A673 (cell line): ENCODE measurements at regions of chr15 and their contacts with region 1.

Region 1: GRCh38 chr15:29962407-29962806 is 120.3 kb upstream of the GOLGA8J start:
- DNase-seq: no peak
- H3K4me3 ChIP-seq: no peak overlapping the region
- H3K27ac ChIP-seq: no peak overlapping the region
- H3K4me1 ChIP-seq: no peaks in the 10 kb centered on the region
- H3K27me3 ChIP-seq: peaks cover 30% of the 10 kb centered on the region
- CTCF ChIP-seq: no peak

Region 2: DNA sequence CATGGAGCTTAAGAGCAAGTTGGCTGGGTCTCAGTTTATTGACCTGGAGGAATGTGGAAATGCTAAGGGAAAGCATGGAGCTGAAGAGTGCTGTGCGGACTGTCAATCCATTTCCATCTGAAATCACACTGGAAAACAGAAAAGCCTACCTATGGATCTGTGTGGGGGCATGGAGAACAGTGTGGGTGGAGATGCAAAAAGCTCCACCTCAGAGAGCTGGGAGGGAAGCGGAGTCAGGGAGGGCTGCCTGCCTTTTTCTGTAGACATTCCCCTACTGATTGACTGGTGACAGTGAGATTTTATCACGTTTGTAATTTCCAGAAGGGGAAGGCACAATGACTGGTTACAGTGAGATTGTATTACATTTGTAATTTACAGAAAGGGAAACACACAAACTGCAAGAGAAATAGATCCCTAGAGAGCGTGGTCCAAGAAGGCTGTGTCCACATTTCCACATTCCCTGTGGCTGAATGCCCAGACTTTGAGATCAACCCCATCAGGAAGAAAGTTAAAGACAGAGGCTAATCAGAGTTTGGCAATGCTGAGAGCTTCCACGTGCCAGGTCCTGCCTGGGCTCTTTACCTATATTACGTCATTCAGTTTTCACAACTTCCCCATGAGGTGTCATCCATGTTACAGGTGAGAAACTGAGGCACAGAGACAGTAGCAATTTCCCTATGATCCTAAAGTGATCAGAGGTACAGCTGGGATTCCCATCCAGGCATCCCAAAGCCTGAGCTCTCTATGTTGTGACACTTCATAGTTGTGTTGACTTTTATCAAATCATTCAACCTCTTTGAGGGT is 625.0 kb before region 1 on chr15:
- CTCF ChIA-PET with region 1: no interaction called
- POLR2A ChIA-PET with region 1: interaction called, 13 read pairs
- intact Hi-C with region 1: no loop called
- DNase-seq: no peak
- H3K4me3 ChIP-seq: no peak overlapping the region
- H3K27ac ChIP-seq: no peak overlapping the region
- H3K4me1 ChIP-seq: no peaks in the 10 kb centered on the region
- H3K27me3 ChIP-seq: no peaks in the 10 kb centered on the region
- CTCF ChIP-seq: no peak

Region 3: GRCh38 chr15:29805043-29805707 is 157.2 kb before region 1 on chr15:
- CTCF ChIA-PET with region 1: no interaction called
- POLR2A ChIA-PET with region 1: no interaction called
- intact Hi-C with region 1: no loop called
- DNase-seq: peak; percentile 69
- H3K4me3 ChIP-seq: no peak overlapping the region
- H3K27ac ChIP-seq: no peak overlapping the region
- H3K4me1 ChIP-seq: peaks cover 21% of the 10 kb centered on the region
- H3K27me3 ChIP-seq: no peaks in the 10 kb centered on the region
- CTCF ChIP-seq: no peak